MCF 10A (cell line): ENCODE measurements at regions of chr12 and their contacts with region 1.

Region 1: GRCh38 chr12:89470741-89471509 is 53.7 kb downstream of the GALNT4 start:
- DNase-seq: peak; percentile 47
- H3K4me3 Mint-ChIP-seq: no peak overlapping the region
- H3K27ac Mint-ChIP-seq: no peak overlapping the region
- H3K4me1 Mint-ChIP-seq: peaks cover 14% of the 10 kb centered on the region
- H3K27me3 Mint-ChIP-seq: no peaks in the 10 kb centered on the region
- CTCF ChIP-seq: peak; percentile 49

Region 2: GRCh38 chr12:89514751-89515150 is 43.8 kb after region 1 on chr12:
- CTCF ChIA-PET with region 1: interaction called, 12 read pairs
- POLR2A ChIA-PET with region 1: no interaction called
- intact Hi-C with region 1: no loop called
- DNase-seq: no peak
- H3K4me3 Mint-ChIP-seq: no peak overlapping the region
- H3K27ac Mint-ChIP-seq: no peak overlapping the region
- H3K4me1 Mint-ChIP-seq: peaks cover 7% of the 10 kb centered on the region
- H3K27me3 Mint-ChIP-seq: no peaks in the 10 kb centered on the region
- CTCF ChIP-seq: no peak

Region 3: DNA sequence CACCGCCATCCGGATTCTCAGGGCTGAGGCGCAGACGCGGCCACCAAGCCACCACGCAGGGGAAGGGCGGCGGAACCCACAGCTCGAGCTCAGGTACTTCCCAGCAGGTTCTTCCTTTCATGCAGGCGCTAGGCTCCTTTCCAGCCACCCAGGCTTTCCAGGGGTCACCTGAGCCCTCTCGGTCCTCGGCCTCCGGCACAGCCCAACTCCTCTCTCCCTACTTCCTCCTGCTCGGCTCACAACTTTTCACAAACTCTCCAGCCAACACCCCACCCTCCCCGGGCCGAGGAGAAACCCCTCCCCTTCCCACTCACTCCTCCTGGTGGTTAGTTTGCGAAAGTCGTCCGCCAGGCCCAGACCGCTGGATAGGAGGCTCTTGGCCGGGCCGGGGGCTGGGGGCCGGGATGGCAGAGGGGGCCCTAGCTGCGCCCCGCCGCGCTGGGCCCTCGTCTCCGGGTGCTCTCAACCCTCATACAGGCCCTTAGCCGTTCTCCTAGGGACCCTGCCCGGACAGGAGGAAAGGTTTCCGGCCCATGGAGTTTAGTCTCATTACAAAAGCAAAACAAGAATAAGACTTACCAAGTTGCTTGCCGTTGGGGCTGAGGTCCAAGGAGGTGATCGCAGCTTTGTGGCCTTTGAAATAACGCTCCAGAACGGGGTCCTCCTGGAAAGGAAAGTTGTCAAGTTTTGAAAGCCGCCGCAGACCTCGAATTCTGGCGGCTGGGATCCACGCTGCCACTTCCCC is 53.8 kb after region 1 on chr12 and contains the start of gene GALNT4:
- CTCF ChIA-PET with region 1: interaction called, 81 read pairs
- POLR2A ChIA-PET with region 1: interaction called, 15 read pairs
- intact Hi-C with region 1: loop called (anchors 1 kb)
- DNase-seq: peak; percentile 91
- H3K4me3 Mint-ChIP-seq: peak within 1 kb of the TSS; percentile 99
- H3K27ac Mint-ChIP-seq: peak within 1 kb of the TSS; percentile 79
- H3K4me1 Mint-ChIP-seq: peaks cover 29% of the 10 kb centered on the region
- H3K27me3 Mint-ChIP-seq: no peaks in the 10 kb centered on the region
- CTCF ChIP-seq: peak; percentile 73
- total RNA-seq, gene GALNT4: 2.6 and 2.8 TPM in 2 replicates

Region 4: DNA sequence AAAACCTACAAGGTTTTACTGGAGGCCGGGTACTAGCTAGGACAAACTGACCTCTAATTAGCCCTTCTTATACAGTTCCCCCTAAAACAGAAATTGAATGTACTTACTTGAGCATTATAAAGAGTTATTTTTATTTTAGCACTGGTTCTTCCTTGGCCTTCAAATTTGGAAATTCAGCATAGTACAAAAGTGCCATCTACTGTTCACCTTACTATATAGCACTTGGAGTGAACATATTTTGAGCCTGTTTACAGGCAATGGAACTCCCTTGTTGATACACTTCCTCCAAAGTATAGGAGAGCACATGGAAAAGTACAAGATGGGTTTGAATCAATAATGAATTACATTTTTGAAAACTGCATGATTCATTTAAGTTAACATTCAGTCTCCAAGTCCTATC is 58.8 kb after region 1 on chr12:
- CTCF ChIA-PET with region 1: interaction called, 81 read pairs
- POLR2A ChIA-PET with region 1: interaction called, 15 read pairs
- intact Hi-C with region 1: loop called (anchors 1 kb)
- DNase-seq: peak; percentile 54
- H3K4me3 Mint-ChIP-seq: no peak overlapping the region
- H3K27ac Mint-ChIP-seq: no peak overlapping the region
- H3K4me1 Mint-ChIP-seq: no peaks in the 10 kb centered on the region
- H3K27me3 Mint-ChIP-seq: no peaks in the 10 kb centered on the region
- CTCF ChIP-seq: peak; percentile 72